MCF 10A (cell line): ENCODE measurements at regions of chr10 and their contacts with region 1.

Region 1: GRCh38 chr10:116771101-116771958 is 29.0 kb upstream of the HSPA12A start:
- DNase-seq: peak; percentile 98
- H3K4me3 Mint-ChIP-seq: peak overlapping the region; percentile 28
- H3K27ac Mint-ChIP-seq: peak overlapping the region; percentile 92
- H3K4me1 Mint-ChIP-seq: peaks cover 41% of the 10 kb centered on the region
- H3K27me3 Mint-ChIP-seq: no peaks in the 10 kb centered on the region
- CTCF ChIP-seq: no peak

Region 2: GRCh38 chr10:116742367-116743265 is 28.7 kb before region 1 on chr10 and contains the start of gene HSPA12A:
- CTCF ChIA-PET with region 1: interaction called, 3 read pairs
- POLR2A ChIA-PET with region 1: interaction called, 29 read pairs
- intact Hi-C with region 1: no loop called
- DNase-seq: peak; percentile 79
- H3K4me3 Mint-ChIP-seq: peak within 1 kb of the TSS; percentile 71
- H3K27ac Mint-ChIP-seq: no peak within 1 kb of the TSS
- H3K4me1 Mint-ChIP-seq: no peaks in the 10 kb centered on the region
- H3K27me3 Mint-ChIP-seq: no peaks in the 10 kb centered on the region
- CTCF ChIP-seq: no peak
- total RNA-seq, gene HSPA12A: 9.1 and 13.1 TPM in 2 replicates

Region 3: GRCh38 chr10:116826803-116827202 is 55.5 kb after region 1 on chr10:
- CTCF ChIA-PET with region 1: no interaction called
- POLR2A ChIA-PET with region 1: no interaction called
- intact Hi-C with region 1: no loop called
- DNase-seq: peak; percentile 63
- H3K4me3 Mint-ChIP-seq: no peak overlapping the region
- H3K27ac Mint-ChIP-seq: no peak overlapping the region
- H3K4me1 Mint-ChIP-seq: no peaks in the 10 kb centered on the region
- H3K27me3 Mint-ChIP-seq: no peaks in the 10 kb centered on the region
- CTCF ChIP-seq: no peak